CD14-positive monocyte (primary cell): ENCODE measurements at regions of chr4 and their contacts with region 1.

Region 1: GRCh38 chr4:24912252-24913118 is at the start of gene CCDC149:
- DNase-seq: peak; percentile 34 to 49 (median 35)
- H3K4me3 ChIP-seq: peak within 1 kb of the TSS; percentile 57 to 87 (median 79)
- H3K4me3 Mint-ChIP-seq: peak within 1 kb of the TSS; percentile 86 to 91
- H3K27ac ChIP-seq: peak within 1 kb of the TSS; percentile 14 to 73
- H3K27ac Mint-ChIP-seq: peak within 1 kb of the TSS; percentile 62 to 93 (median 77)
- H3K4me1 ChIP-seq: peaks cover 19 to 20% of the 10 kb centered on the region in 2 donors
- H3K4me1 Mint-ChIP-seq: peaks cover 25% of the 10 kb centered on the region
- H3K27me3 ChIP-seq: no peaks in the 10 kb centered on the region
- H3K27me3 Mint-ChIP-seq: peaks cover 0 to 4% (median 2%) of the 10 kb centered on the region in 3 donors
- CTCF ChIP-seq: no peak
- polyA plus RNA-seq, gene CCDC149: 5.5 to 15.8 (median 14.9) TPM

Region 2: DNA sequence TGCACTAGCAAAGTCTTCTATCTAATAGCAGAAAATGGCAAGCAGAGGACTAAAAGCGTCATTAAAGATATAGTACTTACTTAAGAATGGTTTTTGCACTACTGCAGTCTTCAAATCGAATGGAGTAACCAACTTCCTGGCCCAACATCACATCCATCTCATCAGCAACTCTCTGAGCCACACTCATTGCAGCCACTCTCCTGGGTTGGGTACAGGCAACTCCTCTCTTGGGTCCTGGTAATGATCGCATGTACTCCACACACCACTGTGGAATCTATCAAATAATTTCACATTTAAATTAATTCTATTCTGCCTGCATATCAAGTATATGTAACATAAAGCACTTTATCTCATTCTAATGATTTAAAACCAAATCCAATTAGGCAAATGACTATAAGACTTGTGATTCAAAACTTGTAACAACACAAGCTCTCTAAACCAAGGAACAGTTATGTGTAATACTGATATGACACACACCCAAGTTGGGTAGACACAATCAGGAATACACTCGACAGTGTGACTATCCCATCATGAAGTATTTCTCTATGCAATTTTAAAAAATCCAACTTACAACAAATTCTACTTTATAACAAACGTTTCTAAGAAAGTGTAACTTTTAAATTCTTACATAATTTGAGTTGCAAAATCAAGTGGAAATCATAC is 341.8 kb before region 1 on chr4:
- intact Hi-C with region 1: loop called in 1 of 2 experiments (anchors 10 kb)
- DNase-seq: peak in 1 of 3 donors; percentile 14
- H3K4me3 ChIP-seq: no peak overlapping the region
- H3K4me3 Mint-ChIP-seq: no peak overlapping the region
- H3K27ac ChIP-seq: peak overlapping the region in 1 of 2 donors; percentile 55
- H3K27ac Mint-ChIP-seq: peak overlapping the region in 3 of 7 donors; percentile 1 to 80 (median 38)
- H3K4me1 ChIP-seq: peaks cover 3 to 14% of the 10 kb centered on the region in 2 donors
- H3K4me1 Mint-ChIP-seq: peaks cover 28% of the 10 kb centered on the region
- H3K27me3 ChIP-seq: no peaks in the 10 kb centered on the region
- H3K27me3 Mint-ChIP-seq: no peaks in the 10 kb centered on the region
- CTCF ChIP-seq: no peak

Region 3: DNA sequence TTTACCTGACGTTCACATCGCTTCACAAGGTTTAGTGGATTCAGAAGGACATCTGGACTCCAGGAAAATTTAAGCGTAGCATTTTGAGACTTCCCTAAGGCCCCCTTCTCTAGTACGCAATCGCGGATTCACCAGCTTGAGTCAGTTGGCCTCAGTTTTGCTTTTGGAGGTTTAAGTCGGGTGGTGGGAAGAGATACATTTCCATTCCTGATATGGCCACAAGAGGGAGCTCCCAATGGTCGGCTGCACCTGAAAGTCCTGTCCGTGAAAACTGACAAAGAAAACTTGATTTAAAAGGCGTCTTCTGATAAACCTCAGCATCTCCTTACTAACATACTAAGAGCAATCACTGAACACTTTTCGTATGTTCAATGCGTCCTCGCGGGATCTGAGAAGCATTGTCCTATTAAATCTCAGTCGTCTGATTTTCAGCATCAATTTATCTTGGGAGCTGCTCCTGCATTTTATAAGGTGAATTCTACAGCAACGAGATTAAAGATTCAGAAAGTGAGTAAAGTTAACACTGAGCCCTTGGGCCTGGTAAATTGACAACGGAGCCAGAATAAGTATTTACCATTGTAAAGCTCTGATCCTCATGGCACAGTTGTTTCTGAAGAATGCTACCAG is 67.7 kb after region 1 on chr4:
- intact Hi-C with region 1: loop called (anchors 5 to 10 kb)
- DNase-seq: peak; percentile 78 to 96 (median 86)
- H3K4me3 ChIP-seq: peak overlapping the region; percentile 35 to 92 (median 70)
- H3K4me3 Mint-ChIP-seq: peak overlapping the region; percentile 70 to 86
- H3K27ac ChIP-seq: peak overlapping the region; percentile 73 to 83
- H3K27ac Mint-ChIP-seq: peak overlapping the region; percentile 90 to 97 (median 97)
- H3K4me1 ChIP-seq: peaks cover 55 to 59% of the 10 kb centered on the region in 2 donors
- H3K4me1 Mint-ChIP-seq: peaks cover 53% of the 10 kb centered on the region
- H3K27me3 ChIP-seq: no peaks in the 10 kb centered on the region
- H3K27me3 Mint-ChIP-seq: peaks cover 0 to 2% (median 1%) of the 10 kb centered on the region in 3 donors
- CTCF ChIP-seq: peak; percentile 89